ENCODE measurements at regions of chrX and their contacts with region 1.

Region 1: GRCh38 chrX:34918856-34919255 is 23.7 kb upstream of the FAM47B start:
- DNase-seq: peak; percentile 75
- ATAC-seq: peak; percentile 44
- H3K4me3 ChIP-seq: no peak overlapping the region
- H3K27ac ChIP-seq: no peak overlapping the region
- H3K4me1 ChIP-seq: no peaks in the 10 kb centered on the region
- H3K27me3 ChIP-seq: no peaks in the 10 kb centered on the region
- CTCF ChIP-seq: peak; percentile 53
- POLR2A ChIP-seq: no peak
- RAD21 ChIP-seq: peak; percentile 68

Region 2: GRCh38 chrX:34638116-34638515 is 280.7 kb before region 1 on chrX:
- CTCF ChIA-PET with region 1: no interaction called
- POLR2A ChIA-PET with region 1: no interaction called
- dilution Hi-C with region 1: no loop called
- in situ Hi-C with region 1: no loop called
- intact Hi-C with region 1: loop called (anchors 5 kb)
- DNase-seq: peak; percentile 54
- ATAC-seq: peak; percentile 53
- H3K4me3 ChIP-seq: no peak overlapping the region
- H3K27ac ChIP-seq: no peak overlapping the region
- H3K4me1 ChIP-seq: peaks cover 5% of the 10 kb centered on the region
- H3K27me3 ChIP-seq: no peaks in the 10 kb centered on the region
- CTCF ChIP-seq: peak; percentile 53
- POLR2A ChIP-seq: no peak
- RAD21 ChIP-seq: peak; percentile 64

Region 3: GRCh38 chrX:34961662-34962061 is 42.8 kb after region 1 on chrX:
- CTCF ChIA-PET with region 1: no interaction called
- POLR2A ChIA-PET with region 1: no interaction called
- dilution Hi-C with region 1: no loop called
- in situ Hi-C with region 1: no loop called
- intact Hi-C with region 1: no loop called
- DNase-seq: no peak
- ATAC-seq: no peak
- H3K4me3 ChIP-seq: no peak overlapping the region
- H3K27ac ChIP-seq: no peak overlapping the region
- H3K4me1 ChIP-seq: no peaks in the 10 kb centered on the region
- H3K27me3 ChIP-seq: no peaks in the 10 kb centered on the region
- CTCF ChIP-seq: no peak
- POLR2A ChIP-seq: no peak
- RAD21 ChIP-seq: no peak

Measured in IMR-90 (cell line).